Mucosa of descending colon (tissue), 3 donors: ENCODE measurements at regions of chr15 and their contacts with region 1.

Region 1: GRCh38 chr15:36501063-36501678 is 78.3 kb upstream of the CDIN1 start:
- DNase-seq: peak in 1 of 3 donors; percentile 41
- ATAC-seq: peak; percentile 60
- H3K4me3 ChIP-seq: no peak overlapping the region
- H3K4me1 ChIP-seq: no peaks in the 10 kb centered on the region
- CTCF ChIP-seq: no peak

Region 2: GRCh38 chr15:36557364-36557763 is 56.2 kb after region 1 on chr15:
- intact Hi-C with region 1: no loop called
- DNase-seq: no peak
- ATAC-seq: no peak
- H3K4me3 ChIP-seq: no peak overlapping the region
- H3K4me1 ChIP-seq: no peaks in the 10 kb centered on the region
- CTCF ChIP-seq: no peak

Region 3: GRCh38 chr15:37106490-37107001 is 605.4 kb after region 1 on chr15:
- intact Hi-C with region 1: loop called in 1 of 2 experiments (anchors 5 kb)
- DNase-seq: peak in 1 of 3 donors; percentile 50
- ATAC-seq: no peak
- H3K4me3 ChIP-seq: no peak overlapping the region
- H3K4me1 ChIP-seq: peaks cover 9% of the 10 kb centered on the region
- CTCF ChIP-seq: no peak

Region 4: GRCh38 chr15:37134699-37135131 is 633.5 kb after region 1 on chr15:
- intact Hi-C with region 1: loop called in 1 of 2 experiments (anchors 5 kb)
- DNase-seq: peak in 1 of 3 donors; percentile 27
- ATAC-seq: no peak
- H3K4me3 ChIP-seq: no peak overlapping the region
- H3K4me1 ChIP-seq: no peaks in the 10 kb centered on the region
- CTCF ChIP-seq: no peak